ENCODE measurements at regions of chr2 and their contacts with region 1.

Region 1: DNA sequence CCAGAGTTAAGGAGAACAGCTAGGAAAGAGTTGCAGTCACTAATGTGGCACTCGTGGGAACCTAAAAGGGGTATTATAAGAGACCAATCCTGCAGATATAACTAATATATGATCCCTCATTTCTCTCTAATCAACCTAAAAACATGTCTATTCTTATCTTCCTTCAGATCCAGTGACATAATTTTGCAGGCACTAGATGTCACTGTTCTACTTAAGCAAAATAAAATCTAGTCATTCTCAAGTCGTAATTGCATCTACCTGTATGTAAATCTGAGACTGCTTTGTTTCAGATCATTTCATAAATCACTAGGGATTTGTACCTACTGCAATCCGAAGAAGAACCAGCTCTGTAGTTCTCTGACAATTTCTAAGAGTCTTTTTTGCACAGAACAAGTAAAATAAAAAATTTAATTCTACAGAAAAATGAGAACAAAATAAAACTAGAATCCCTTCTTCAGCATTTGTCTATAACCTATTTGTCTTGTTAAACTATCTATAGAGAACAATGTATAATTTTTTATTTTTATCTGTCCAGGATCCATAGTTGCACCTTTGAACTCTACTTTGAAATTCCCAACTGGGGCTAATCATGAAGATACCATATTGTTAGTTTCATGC is 56.5 kb upstream of the ERBB4 start:
- DNase-seq: no peak
- H3K4me3 Mint-ChIP-seq: no peak overlapping the region
- H3K27ac Mint-ChIP-seq: no peak overlapping the region
- H3K4me1 Mint-ChIP-seq: peaks cover 1% of the 10 kb centered on the region
- H3K27me3 Mint-ChIP-seq: no peaks in the 10 kb centered on the region
- CTCF ChIP-seq: peak; percentile 31

Region 2: GRCh38 chr2:212667751-212668316 is 72.7 kb after region 1 on chr2:
- CTCF ChIA-PET with region 1: no interaction called
- intact Hi-C with region 1: loop called (anchors 5 kb)
- DNase-seq: no peak
- H3K4me3 Mint-ChIP-seq: no peak overlapping the region
- H3K27ac Mint-ChIP-seq: no peak overlapping the region
- H3K4me1 Mint-ChIP-seq: no peaks in the 10 kb centered on the region
- H3K27me3 Mint-ChIP-seq: no peaks in the 10 kb centered on the region
- CTCF ChIP-seq: no peak

Region 3: GRCh38 chr2:212682937-212683336 is 87.8 kb after region 1 on chr2:
- CTCF ChIA-PET with region 1: no interaction called
- intact Hi-C with region 1: no loop called
- DNase-seq: no peak
- H3K4me3 Mint-ChIP-seq: no peak overlapping the region
- H3K27ac Mint-ChIP-seq: no peak overlapping the region
- H3K4me1 Mint-ChIP-seq: peaks cover 13% of the 10 kb centered on the region
- H3K27me3 Mint-ChIP-seq: no peaks in the 10 kb centered on the region
- CTCF ChIP-seq: no peak

Region 4: GRCh38 chr2:212766919-212767556 is 171.9 kb after region 1 on chr2:
- CTCF ChIA-PET with region 1: no interaction called
- intact Hi-C with region 1: loop called (anchors 5 kb)
- DNase-seq: no peak
- H3K4me3 Mint-ChIP-seq: no peak overlapping the region
- H3K27ac Mint-ChIP-seq: no peak overlapping the region
- H3K4me1 Mint-ChIP-seq: peaks cover 6% of the 10 kb centered on the region
- H3K27me3 Mint-ChIP-seq: no peaks in the 10 kb centered on the region
- CTCF ChIP-seq: no peak